ENCODE measurements at regions of chr12 and their contacts with region 1.

Region 1: GRCh38 chr12:104108755-104109445 is 29.1 kb downstream of the NFYB start:
- DNase-seq: peak; percentile 75
- ATAC-seq: peak; percentile 98
- H3K4me3 ChIP-seq: no peak overlapping the region
- H3K27ac ChIP-seq: no peak overlapping the region
- H3K4me1 ChIP-seq: no peaks in the 10 kb centered on the region
- H3K27me3 ChIP-seq: no peaks in the 10 kb centered on the region
- CTCF ChIP-seq: peak; percentile 87 to 94 (median 93)
- POLR2A ChIP-seq: no peak
- RAD21 ChIP-seq: peak; percentile 86

Region 2: DNA sequence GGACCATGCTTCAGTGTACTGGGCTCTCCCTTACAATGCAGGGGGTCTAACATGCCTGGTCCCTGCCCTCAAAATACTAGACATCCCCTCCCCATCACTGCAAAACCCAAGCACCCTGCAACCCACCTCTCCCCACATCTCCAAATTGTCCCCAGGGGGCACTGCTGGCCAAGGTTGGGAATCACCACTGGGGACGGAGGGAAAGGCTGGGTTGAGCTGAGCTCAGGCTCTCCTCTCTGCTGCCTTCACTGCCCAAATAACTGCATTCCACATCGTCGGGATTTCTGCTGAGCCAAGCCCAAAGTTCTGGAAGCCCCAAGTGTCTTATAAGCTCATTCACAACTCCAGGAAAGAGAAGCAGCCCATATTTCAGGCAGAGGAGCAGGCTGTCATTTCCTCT is 337.4 kb before region 1 on chr12:
- CTCF ChIA-PET with region 1: interaction called, 3 read pairs
- POLR2A ChIA-PET with region 1: no interaction called
- RAD21 ChIA-PET with region 1: no interaction called
- intact Hi-C with region 1: loop called (anchors 5 kb)
- DNase-seq: no peak
- ATAC-seq: peak; percentile 85
- H3K4me3 ChIP-seq: no peak overlapping the region
- H3K27ac ChIP-seq: no peak overlapping the region
- H3K4me1 ChIP-seq: peaks cover 6 to 8% of the 10 kb centered on the region in 2 experiments; a peak in 2 of 4 replicates
- H3K27me3 ChIP-seq: no peaks in the 10 kb centered on the region
- CTCF ChIP-seq: peak; percentile 64 to 73 (median 68); a peak in 5 of 6 replicates
- POLR2A ChIP-seq: no peak
- RAD21 ChIP-seq: peak; percentile 91

Region 3: GRCh38 chr12:103884316-103884715 is 224.6 kb before region 1 on chr12:
- CTCF ChIA-PET with region 1: interaction called, 19 read pairs
- POLR2A ChIA-PET with region 1: no interaction called
- RAD21 ChIA-PET with region 1: interaction called in 1 of 2 experiments, 4 read pairs
- intact Hi-C with region 1: loop called (anchors 1 kb)
- DNase-seq: no peak
- ATAC-seq: no peak
- H3K4me3 ChIP-seq: no peak overlapping the region
- H3K27ac ChIP-seq: no peak overlapping the region
- H3K4me1 ChIP-seq: no peaks in the 10 kb centered on the region
- H3K27me3 ChIP-seq: no peaks in the 10 kb centered on the region
- CTCF ChIP-seq: peak; percentile 29 to 56 (median 43); a peak in 3 of 6 replicates
- POLR2A ChIP-seq: no peak
- RAD21 ChIP-seq: peak; percentile 79

Region 4: GRCh38 chr12:103965590-103966504 is 143.1 kb before region 1 on chr12 and contains the start of gene TDG:
- CTCF ChIA-PET with region 1: interaction called, 3 read pairs
- POLR2A ChIA-PET with region 1: no interaction called
- RAD21 ChIA-PET with region 1: no interaction called
- intact Hi-C with region 1: loop called (anchors 2 kb)
- DNase-seq: peak; percentile 98
- ATAC-seq: peak; percentile 95
- H3K4me3 ChIP-seq: peak within 1 kb of the TSS; percentile 88 to 90
- H3K27ac ChIP-seq: peak within 1 kb of the TSS; percentile 78
- H3K4me1 ChIP-seq: peaks cover 5 to 23% of the 10 kb centered on the region in 2 experiments; a peak in 3 of 4 replicates
- H3K27me3 ChIP-seq: no peaks in the 10 kb centered on the region
- CTCF ChIP-seq: 0 out of 6 replicates have a peak, but pooled peaks of 1 of the 3 experiments have one; percentile 5
- POLR2A ChIP-seq: peak; percentile 90
- RAD21 ChIP-seq: no peak
- total RNA-seq, gene TDG: 23.9 TPM

Region 5: DNA sequence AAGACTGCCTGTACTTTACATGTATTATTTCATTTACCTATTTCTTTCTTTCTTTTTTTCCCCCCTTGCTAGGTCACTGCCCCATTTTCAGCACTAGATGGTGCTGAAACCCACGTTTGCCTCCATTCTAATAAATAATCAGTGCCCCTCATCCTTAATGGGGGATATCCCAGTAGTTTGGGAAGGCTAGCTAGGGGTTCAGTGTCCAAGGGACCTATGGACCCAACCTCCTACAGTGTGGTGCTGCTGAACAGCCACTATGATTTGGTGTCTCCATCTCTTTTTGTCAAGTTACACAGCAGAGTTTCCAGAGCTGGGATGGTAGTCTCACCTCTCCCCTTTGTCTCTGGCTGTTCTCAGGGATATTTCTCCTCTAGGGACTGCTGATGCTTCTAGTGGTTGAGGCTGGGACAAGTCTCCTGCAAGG is 51.1 kb before region 1 on chr12:
- CTCF ChIA-PET with region 1: interaction called, 19 read pairs
- POLR2A ChIA-PET with region 1: no interaction called
- RAD21 ChIA-PET with region 1: interaction called, 3 to 4 read pairs
- intact Hi-C with region 1: loop called (anchors 1 kb)
- DNase-seq: no peak
- ATAC-seq: peak; percentile 76
- H3K4me3 ChIP-seq: no peak overlapping the region
- H3K27ac ChIP-seq: no peak overlapping the region
- H3K4me1 ChIP-seq: no peaks in the 10 kb centered on the region
- H3K27me3 ChIP-seq: no peaks in the 10 kb centered on the region
- CTCF ChIP-seq: peak; percentile 78 to 86 (median 79)
- POLR2A ChIP-seq: no peak
- RAD21 ChIP-seq: peak; percentile 87

Region 6: DNA sequence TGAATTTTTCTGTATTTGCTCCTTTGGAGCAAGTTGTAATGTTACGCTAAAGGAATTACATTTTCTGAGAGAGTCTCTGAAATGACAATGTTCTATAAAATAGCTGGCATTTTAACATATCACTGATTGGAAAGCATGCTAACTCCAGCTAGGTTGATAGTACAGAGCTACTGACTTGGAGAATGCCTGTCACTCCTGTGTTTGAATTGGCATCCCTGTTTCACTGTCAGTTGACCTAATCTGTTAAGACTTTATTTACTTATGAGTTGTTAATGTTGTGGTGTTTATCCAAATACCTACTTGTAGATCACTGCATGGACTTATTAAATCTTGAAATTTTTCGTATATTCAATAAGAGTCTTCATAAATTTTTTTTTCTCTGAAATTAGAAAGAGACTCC is 10.9 kb before region 1 on chr12:
- CTCF ChIA-PET with region 1: interaction called, 29 read pairs
- POLR2A ChIA-PET with region 1: no interaction called
- RAD21 ChIA-PET with region 1: no interaction called
- intact Hi-C with region 1: no loop called
- DNase-seq: no peak
- ATAC-seq: no peak
- H3K4me3 ChIP-seq: no peak overlapping the region
- H3K27ac ChIP-seq: no peak overlapping the region
- H3K4me1 ChIP-seq: no peaks in the 10 kb centered on the region
- H3K27me3 ChIP-seq: no peaks in the 10 kb centered on the region
- CTCF ChIP-seq: no peak
- POLR2A ChIP-seq: no peak
- RAD21 ChIP-seq: no peak

Region 7: DNA sequence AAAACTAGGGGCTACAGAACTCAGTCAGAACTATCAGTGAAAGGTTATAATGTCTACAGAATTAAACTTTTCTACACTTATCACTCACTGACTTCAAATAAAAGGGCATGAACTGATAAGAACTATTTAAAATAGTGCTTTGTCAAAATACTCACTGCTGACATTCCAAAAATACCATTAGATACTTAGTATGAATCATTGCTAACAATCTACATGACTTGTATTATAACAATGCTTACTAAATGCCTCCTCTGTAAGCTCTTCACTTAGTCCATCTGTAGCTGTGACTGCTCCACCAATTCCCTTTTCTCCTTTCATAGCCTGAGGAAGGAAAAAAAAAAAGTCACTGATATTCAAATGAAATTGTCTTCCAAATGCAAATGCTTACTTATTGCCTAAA is 12.1 kb after region 1 on chr12:
- CTCF ChIA-PET with region 1: interaction called, 13 read pairs
- POLR2A ChIA-PET with region 1: no interaction called
- RAD21 ChIA-PET with region 1: no interaction called
- intact Hi-C with region 1: no loop called
- DNase-seq: no peak
- ATAC-seq: peak; percentile 72; the same call in 1 of the 2 replicates
- H3K4me3 ChIP-seq: no peak overlapping the region
- H3K27ac ChIP-seq: no peak overlapping the region
- H3K4me1 ChIP-seq: peaks cover 0 to 13% of the 10 kb centered on the region in 2 experiments; a peak in 3 of 4 replicates
- H3K27me3 ChIP-seq: no peaks in the 10 kb centered on the region
- CTCF ChIP-seq: no peak
- POLR2A ChIP-seq: no peak
- RAD21 ChIP-seq: no peak

Region 8: DNA sequence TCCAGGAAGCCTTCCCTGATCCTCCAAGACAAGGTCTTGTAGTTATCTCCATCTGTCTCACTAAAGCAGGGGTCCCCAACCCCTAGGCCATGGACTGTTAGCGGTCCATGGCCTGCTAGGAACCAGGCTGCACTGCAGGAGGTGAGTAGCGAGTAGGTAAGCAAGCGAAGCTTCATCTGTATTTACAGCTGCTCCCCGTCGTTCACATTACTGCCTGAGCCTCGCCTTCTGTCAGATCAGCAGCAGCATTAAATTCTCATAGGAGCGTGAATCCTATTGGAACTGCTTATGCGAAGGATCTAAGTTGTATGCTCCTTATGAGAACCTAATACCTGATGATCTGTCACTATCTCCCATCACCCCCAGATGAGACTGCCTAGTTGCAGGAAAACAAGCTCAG is 41.5 kb after region 1 on chr12:
- CTCF ChIA-PET with region 1: no interaction called
- POLR2A ChIA-PET with region 1: no interaction called
- RAD21 ChIA-PET with region 1: no interaction called
- intact Hi-C with region 1: no loop called
- DNase-seq: no peak
- ATAC-seq: no peak
- H3K4me3 ChIP-seq: no peak overlapping the region
- H3K27ac ChIP-seq: no peak overlapping the region
- H3K4me1 ChIP-seq: no peaks in the 10 kb centered on the region
- H3K27me3 ChIP-seq: no peaks in the 10 kb centered on the region
- CTCF ChIP-seq: no peak
- POLR2A ChIP-seq: no peak
- RAD21 ChIP-seq: no peak

Measured in HCT116 (cell line).